ENCODE measurements at regions of chr17 and their contacts with region 1.

Region 1: DNA sequence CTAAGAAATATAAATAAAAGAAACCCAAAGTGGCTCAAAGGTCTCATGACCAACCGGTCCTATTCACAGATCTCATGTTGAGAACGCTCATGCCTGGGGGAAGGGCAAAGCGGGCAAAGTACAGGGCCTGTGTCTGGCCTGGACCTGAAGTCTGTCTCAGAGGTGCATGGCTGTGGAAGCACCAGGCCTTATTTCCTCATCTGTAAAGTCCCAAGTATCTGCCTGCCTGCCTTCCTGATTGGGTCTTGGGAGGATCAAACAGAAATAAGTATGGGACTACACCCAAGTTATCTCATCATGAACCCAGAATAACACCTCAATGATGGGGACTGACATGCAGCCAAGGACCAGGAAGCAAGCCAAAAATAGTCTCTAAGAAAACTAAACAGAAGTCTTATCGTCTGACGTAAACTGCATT is 14.2 kb downstream of the AXIN2 start:
- DNase-seq: no peak
- ATAC-seq: peak; percentile 82

Region 2: GRCh38 chr17:65463242-65463641 is 84.0 kb before region 1 on chr17:
- intact Hi-C with region 1: loop called (anchors 5 kb)
- DNase-seq: peak; percentile 86
- ATAC-seq: peak; percentile 98

Region 3: DNA sequence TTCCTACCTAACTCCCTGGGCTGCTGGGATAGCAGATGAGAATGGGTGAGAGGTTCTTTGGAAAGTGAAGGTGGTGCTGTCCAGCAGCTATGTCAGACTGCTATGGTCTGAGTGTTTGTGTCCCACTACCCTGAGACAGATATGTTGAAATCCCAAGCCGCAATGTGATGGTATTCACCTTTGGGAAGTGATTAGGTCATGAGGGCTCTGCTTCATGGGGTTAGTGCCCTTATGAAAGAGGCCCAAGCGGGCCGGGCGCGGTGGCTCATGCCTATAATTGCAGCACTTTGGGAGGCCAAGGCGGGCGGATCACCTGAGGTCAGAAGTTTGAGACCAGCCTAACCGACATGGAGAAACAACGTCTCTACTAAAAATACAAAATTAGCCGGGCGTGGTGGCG is 67.0 kb before region 1 on chr17:
- intact Hi-C with region 1: no loop called
- DNase-seq: no peak
- ATAC-seq: no peak

Measured in left ventricle myocardium superior (tissue), 1 donor.